ENCODE measurements at regions of chr6 and their contacts with region 1.

Region 1: GRCh38 chr6:87154993-87155841 is at the start of gene ZNF292:
- DNase-seq: peak; percentile 91 to 95
- ATAC-seq: peak; percentile 80
- H3K4me3 ChIP-seq: peak within 1 kb of the TSS; percentile 83 to 98 (median 92)
- H3K27ac ChIP-seq: peak within 1 kb of the TSS; percentile 96 to 98 (median 96)
- H3K4me1 ChIP-seq: peaks cover 44 to 57% of the 10 kb centered on the region in 2 donors
- H3K27me3 ChIP-seq: no peaks in the 10 kb centered on the region
- CTCF ChIP-seq: peak in 3 of 5 experiments; percentile 14 to 43 (median 31)
- POLR2A ChIP-seq: peak; percentile 69 to 71
- total RNA-seq, gene ZNF292: 10.7 to 21.7 (median 11.5) TPM

Region 2: GRCh38 chr6:85642774-85643536 is 1512.3 kb before region 1 on chr6 and contains the start of gene SYNCRIP:
- in situ Hi-C with region 1: no loop called
- intact Hi-C with region 1: loop called (anchors 5 kb)
- DNase-seq: peak; percentile 99
- ATAC-seq: peak; percentile 67 to 70
- H3K4me3 ChIP-seq: peak within 1 kb of the TSS; percentile 93 to 100 (median 98)
- H3K27ac ChIP-seq: peak within 1 kb of the TSS; percentile 96 to 98 (median 98)
- H3K4me1 ChIP-seq: peaks cover 36 to 42% of the 10 kb centered on the region in 2 donors
- H3K27me3 ChIP-seq: no peaks in the 10 kb centered on the region
- CTCF ChIP-seq: no peak
- POLR2A ChIP-seq: peak; percentile 90 to 93
- total RNA-seq, gene SYNCRIP: 43.0 to 59.3 (median 54.5) TPM

Region 3: DNA sequence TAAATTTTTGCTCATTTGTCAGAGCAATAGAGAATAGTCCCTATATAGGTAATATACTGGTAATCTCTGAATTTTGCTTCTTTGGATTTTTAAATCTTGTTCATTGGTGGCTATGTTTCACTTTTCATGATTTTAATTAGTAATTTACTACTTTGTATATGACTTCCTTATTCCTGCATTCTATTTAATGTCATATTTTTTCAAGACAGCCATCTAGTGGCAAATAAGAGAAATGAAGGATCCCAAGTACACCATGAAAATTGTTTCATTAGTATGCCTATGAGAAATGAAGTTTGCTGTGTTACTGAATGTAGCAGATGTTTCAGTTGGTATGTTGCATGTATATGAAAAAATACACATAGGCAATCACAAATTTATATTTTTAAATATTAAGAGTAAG is 82.6 kb after region 1 on chr6:
- in situ Hi-C with region 1: no loop called
- intact Hi-C with region 1: loop called (anchors 5 kb)
- DNase-seq: no peak
- ATAC-seq: peak in 1 of 2 donors; percentile 21
- H3K4me3 ChIP-seq: no peak overlapping the region
- H3K27ac ChIP-seq: no peak overlapping the region
- H3K4me1 ChIP-seq: no peaks in the 10 kb centered on the region
- H3K27me3 ChIP-seq: no peaks in the 10 kb centered on the region
- CTCF ChIP-seq: peak in 4 of 5 experiments; percentile 37 to 68 (median 50)
- POLR2A ChIP-seq: no peak

Region 4: GRCh38 chr6:87291883-87292282 is 136.7 kb after region 1 on chr6:
- in situ Hi-C with region 1: no loop called
- intact Hi-C with region 1: no loop called
- DNase-seq: no peak
- ATAC-seq: no peak
- H3K4me3 ChIP-seq: no peak overlapping the region
- H3K27ac ChIP-seq: no peak overlapping the region
- H3K4me1 ChIP-seq: no peaks in the 10 kb centered on the region
- H3K27me3 ChIP-seq: no peaks in the 10 kb centered on the region
- CTCF ChIP-seq: no peak
- POLR2A ChIP-seq: no peak

Region 5: DNA sequence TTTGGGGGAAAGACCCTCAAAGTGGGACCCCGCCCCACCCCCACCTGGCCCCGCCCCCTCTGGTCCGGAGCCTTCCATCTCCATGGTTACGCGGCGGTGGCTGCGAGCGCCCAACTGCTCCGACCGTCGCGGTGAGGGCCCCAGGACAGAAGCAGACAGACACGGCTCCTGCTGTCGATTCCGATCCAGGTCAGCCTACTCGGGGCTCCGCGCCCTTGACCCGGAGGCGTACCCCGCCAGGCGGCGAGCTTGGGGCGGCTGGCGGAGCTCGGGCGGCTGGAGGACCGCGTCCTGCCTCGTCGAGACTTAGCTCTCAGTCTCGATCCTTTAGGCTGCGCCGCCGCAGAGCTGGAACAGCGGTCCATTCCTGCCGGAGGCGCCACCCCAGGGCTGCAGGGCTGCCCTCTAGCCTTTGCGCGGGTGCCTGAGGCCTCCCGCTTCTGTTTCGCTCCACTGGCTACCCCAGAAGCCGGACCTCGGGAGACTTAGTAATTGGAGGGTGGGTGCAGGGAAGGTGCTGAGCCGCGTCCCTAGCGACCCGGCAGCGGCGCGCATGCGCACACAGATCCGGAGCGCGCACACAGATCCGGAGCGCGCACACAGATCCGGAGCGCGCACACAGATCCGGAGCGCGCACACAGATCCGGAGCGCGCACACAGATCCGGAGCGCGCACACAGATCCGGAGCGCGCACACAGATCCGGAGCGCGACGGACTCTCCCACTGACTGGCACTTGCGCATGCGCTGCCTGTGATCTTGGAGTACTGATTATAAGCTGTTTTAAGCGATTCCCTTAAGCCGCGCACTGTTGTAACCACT is 252.9 kb after region 1 on chr6 and contains the start of gene CFAP206:
- in situ Hi-C with region 1: no loop called
- intact Hi-C with region 1: loop called (anchors 5 kb)
- DNase-seq: peak; percentile 58 to 63
- ATAC-seq: peak; percentile 87 to 88
- H3K4me3 ChIP-seq: peak within 1 kb of the TSS; percentile 72 to 98 (median 96)
- H3K27ac ChIP-seq: peak within 1 kb of the TSS; percentile 72 to 89 (median 81)
- H3K4me1 ChIP-seq: peaks cover 3 to 9% of the 10 kb centered on the region in 2 donors
- H3K27me3 ChIP-seq: no peaks in the 10 kb centered on the region
- CTCF ChIP-seq: no peak
- POLR2A ChIP-seq: no peak
- total RNA-seq, gene CFAP206: 0.20 to 1.6 TPM in 2 of 4 donors, not detected in the others

Region 6: DNA sequence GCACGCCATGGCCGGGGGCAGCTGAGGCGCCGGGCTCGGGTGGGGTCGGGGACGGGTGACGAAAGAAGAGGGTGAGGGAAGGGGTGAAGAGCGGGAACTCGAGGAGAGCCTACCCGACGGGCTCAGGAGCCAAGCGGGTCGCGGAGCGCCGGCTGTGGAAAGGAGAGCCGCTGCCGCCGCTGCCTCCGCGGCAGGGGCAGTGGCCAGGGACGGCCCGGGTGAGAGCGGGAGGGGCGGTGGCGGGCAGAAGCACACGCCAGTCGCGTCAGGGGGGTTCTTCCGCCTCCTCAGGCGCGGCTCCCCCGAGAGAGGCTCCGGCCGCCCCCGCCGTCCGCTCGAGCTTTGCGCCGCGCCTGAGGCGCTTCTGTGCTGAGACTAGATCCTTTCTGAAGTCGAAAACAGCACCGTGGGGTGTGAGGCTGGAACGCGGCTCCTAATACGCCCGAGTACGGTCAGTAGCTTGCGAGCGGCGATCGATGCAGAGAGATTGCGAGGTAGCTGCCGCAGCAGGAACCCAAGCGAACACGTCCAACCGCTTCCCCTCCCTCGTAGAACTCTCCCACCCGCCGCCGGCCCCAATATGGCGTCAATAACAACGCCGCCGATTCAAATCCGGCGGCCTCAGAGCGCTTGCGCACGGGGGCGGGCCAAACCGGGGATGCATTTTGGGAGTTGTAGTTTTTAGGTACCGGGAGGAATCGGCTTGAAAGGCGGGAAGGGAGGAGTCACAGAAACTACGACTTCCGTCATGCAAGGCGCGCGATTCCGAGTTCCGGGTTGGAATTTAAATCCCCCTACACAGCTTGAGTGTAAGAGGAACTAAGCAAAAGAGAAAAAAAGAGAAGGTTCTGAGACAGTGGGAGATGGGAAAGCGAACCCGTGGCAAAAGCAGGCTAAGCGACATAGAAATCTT is 546.7 kb after region 1 on chr6 and contains the start of gene AKIRIN2:
- in situ Hi-C with region 1: no loop called
- intact Hi-C with region 1: loop called (anchors 2 kb)
- DNase-seq: peak; percentile 97
- ATAC-seq: peak; percentile 80 to 81
- H3K4me3 ChIP-seq: peak within 1 kb of the TSS; percentile 86 to 94 (median 94)
- H3K27ac ChIP-seq: peak within 1 kb of the TSS; percentile 94 to 99 (median 97)
- H3K4me1 ChIP-seq: peaks cover 24 to 32% of the 10 kb centered on the region in 2 donors
- H3K27me3 ChIP-seq: no peaks in the 10 kb centered on the region
- CTCF ChIP-seq: no peak
- POLR2A ChIP-seq: peak; percentile 99 to 100
- total RNA-seq, gene AKIRIN2: 25.6 to 44.5 (median 33.1) TPM